Vagina (tissue), 2 donors: ENCODE measurements at regions of chr6 and their contacts with region 1.

Region 1: DNA sequence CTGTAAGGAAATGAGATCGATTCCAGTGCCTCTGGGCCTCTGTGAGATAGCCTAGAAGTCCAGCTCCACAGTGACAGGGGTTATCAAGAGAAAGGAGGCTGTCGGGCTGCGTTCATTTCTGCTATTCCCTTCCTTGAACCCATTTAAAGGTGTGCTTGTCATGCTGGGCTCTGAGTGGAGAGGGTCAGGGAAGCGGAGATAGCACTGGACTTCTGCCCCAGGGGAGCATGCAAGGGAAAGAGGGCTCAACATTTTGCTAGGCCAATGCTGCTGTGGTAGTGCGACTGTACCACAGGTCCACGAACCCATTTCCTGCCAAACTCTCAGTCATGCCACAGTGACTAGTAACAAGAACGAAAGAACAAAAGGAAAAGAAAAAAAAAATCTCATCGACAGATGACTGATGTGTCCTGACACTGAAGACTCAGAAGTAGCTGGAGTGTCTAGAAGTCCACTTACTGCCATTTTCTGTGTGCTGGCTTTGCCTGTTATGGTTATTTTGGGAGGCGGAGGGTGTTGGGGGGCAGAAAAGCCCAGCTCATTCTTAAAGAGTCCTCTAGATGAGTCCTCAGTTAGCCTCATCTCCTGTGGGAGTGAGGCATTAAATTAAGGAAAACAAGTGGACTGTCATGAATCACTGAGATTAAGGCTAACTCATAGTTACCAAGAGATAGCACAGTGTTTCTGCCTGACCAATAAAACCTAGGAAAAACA is 8.1 kb downstream of the NEDD9 start:
- DNase-seq: no peak
- H3K4me3 ChIP-seq: no peak overlapping the region
- H3K27ac ChIP-seq: peak overlapping the region; percentile 50
- H3K4me1 ChIP-seq: peaks cover 49% of the 10 kb centered on the region
- H3K27me3 ChIP-seq: no peaks in the 10 kb centered on the region
- CTCF ChIP-seq: no peak
- POLR2A ChIP-seq: no peak

Region 2: DNA sequence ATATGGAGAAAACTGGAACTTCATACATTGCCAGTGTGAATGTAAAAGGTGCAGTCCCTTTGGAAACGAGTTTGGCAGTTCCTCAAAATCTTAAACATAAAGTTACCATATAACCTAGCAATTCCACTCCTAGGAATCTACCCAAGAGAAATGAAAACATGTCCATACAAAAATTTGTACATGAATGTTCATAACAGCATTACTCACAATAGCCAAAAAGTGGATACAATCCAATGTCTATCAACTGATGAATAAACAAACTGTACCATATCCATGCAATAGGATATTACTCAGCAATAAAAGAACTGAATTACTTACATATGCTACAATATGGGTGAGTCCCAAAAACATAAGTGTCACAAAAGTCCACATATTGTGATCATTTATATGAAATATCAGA is 64.2 kb before region 1 on chr6:
- intact Hi-C with region 1: no loop called
- DNase-seq: no peak
- H3K4me3 ChIP-seq: no peak overlapping the region
- H3K27ac ChIP-seq: no peak overlapping the region
- H3K4me1 ChIP-seq: no peaks in the 10 kb centered on the region
- H3K27me3 ChIP-seq: no peaks in the 10 kb centered on the region
- CTCF ChIP-seq: no peak
- POLR2A ChIP-seq: no peak

Region 3: GRCh38 chr6:11172501-11173332 is 51.7 kb before region 1 on chr6:
- intact Hi-C with region 1: loop called (anchors 10 kb)
- DNase-seq: peak in 1 of 2 donors; percentile 79
- H3K4me3 ChIP-seq: no peak overlapping the region
- H3K27ac ChIP-seq: no peak overlapping the region
- H3K4me1 ChIP-seq: peaks cover 14% of the 10 kb centered on the region
- H3K27me3 ChIP-seq: no peaks in the 10 kb centered on the region
- CTCF ChIP-seq: peak; percentile 74 to 84 (median 81)
- POLR2A ChIP-seq: no peak